PC-9 (cell line): ENCODE measurements at regions of chr1 and their contacts with region 1.

Region 1: DNA sequence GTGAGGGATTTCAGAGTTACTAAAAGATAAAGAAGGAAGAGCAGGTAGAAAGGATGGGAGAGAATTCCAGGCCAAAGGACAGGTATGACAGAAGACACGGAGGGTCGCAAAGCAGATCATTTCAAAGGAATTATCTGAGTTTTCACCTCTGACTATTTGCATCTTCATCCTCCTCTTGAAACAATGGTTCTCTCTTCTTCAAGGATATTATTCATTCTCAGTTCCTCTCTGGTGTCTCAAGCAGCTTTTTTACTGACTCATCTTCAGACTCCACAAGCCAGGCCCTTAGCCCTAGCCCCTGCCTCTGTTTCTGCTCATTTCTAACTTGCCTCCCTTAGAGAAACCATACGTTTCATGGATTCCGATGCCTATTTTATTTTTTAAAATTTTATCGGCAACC is 15.0 kb downstream of the DDX59 start:
- DNase-seq: no peak
- H3K4me3 ChIP-seq: no peak overlapping the region
- H3K27ac ChIP-seq: peak overlapping the region; percentile 61
- H3K4me1 ChIP-seq: peaks cover 27% of the 10 kb centered on the region
- H3K27me3 ChIP-seq: no peaks in the 10 kb centered on the region
- CTCF ChIP-seq: no peak

Region 2: DNA sequence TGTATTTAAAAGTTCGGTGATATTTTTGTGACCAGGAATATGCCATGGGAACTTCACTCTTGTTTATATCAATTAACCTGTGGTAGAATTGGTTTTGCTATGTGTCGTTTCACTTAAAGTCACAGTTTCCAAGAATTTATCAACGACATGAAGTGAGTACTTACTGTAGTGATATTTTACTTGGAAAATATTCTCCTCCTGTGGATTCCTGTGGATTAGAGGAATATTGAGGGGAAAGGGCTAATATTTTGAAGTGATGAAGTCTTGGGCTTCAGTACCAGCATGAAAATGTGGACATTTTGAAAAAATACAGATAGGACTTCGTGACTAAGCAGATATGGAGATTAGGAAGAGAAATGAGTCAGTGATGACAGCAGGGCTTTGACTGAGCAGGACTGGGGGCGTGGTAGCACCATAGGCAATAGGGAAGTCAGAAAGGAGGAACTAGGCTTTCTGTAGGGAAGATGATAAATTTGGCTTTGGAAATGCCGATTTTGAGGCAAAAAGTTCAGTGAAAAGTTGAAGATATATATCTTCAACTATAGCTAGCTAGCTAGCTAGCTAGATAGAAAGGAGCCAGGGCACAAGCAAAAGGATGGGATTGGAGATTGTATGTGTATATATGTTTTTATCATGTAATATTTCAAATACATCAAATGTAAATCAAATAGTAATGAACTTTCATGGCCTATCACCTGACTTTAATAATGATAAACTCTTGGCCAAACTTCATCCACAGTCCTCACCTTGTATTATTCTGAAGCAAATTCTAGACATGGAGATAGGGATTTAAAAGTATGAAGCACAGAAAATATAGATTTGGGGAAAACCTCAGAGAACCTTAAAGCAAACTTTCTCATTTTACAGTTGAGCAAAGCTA is 14.6 kb before region 1 on chr1:
- CTCF ChIA-PET with region 1: no interaction called
- POLR2A ChIA-PET with region 1: interaction called, 12 read pairs
- intact Hi-C with region 1: loop called (anchors 1 kb)
- DNase-seq: peak; percentile 71 to 88
- H3K4me3 ChIP-seq: peak overlapping the region; percentile 10; the same call in 1 of the 2 replicates
- H3K27ac ChIP-seq: peak overlapping the region; percentile 86
- H3K4me1 ChIP-seq: peaks cover 45% of the 10 kb centered on the region
- H3K27me3 ChIP-seq: no peaks in the 10 kb centered on the region
- CTCF ChIP-seq: no peak

Region 3: DNA sequence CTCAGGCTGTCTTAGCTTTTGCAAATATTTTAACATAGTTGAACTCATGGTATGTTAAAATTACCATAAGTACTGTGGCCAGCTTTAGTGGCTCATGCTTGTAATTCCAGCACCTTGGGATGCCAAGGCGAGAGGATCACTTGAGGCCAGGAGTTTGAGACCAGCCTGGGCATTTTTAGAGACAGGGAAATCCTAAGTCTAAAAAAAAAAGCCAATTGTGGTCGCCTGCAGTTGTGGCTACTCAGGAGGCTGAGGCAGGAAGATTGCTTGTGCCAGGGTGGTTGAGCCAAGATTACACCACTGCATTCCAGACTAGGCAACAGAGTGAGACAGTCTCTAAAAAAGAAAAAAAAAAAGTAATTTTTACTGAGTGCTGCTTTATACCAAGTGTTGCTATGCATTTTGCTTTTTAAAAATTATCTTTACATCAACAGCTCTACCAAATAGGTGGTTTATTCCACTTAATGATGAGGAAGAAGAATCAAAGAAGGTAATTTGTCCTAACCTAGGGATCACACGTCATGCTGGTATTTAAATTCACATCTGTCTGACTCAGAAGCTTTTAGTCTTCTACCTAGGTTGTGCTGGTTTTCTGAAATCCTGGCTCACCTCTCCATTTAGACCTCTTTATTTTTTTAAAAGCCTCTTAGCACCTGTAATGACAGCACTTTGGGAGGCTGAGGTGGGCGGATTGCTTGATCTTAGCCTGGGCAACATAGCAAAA is 1710.6 kb after region 1 on chr1:
- CTCF ChIA-PET with region 1: no interaction called
- POLR2A ChIA-PET with region 1: no interaction called
- intact Hi-C with region 1: no loop called
- DNase-seq: no peak
- H3K4me3 ChIP-seq: no peak overlapping the region
- H3K27ac ChIP-seq: peak overlapping the region; percentile 30
- H3K4me1 ChIP-seq: no peaks in the 10 kb centered on the region
- H3K27me3 ChIP-seq: no peaks in the 10 kb centered on the region
- CTCF ChIP-seq: no peak